Prostate gland (tissue), 2 donors: ENCODE measurements at regions of chr7 and their contacts with region 1.

Region 1: GRCh38 chr7:134778941-134779740 is at the start of gene CALD1:
- DNase-seq: peak; percentile 91
- H3K4me3 ChIP-seq: peak within 1 kb of the TSS; percentile 40 to 57
- H3K27ac ChIP-seq: peak within 1 kb of the TSS; percentile 85 to 88
- H3K4me1 ChIP-seq: peaks cover 7% of the 10 kb centered on the region
- H3K27me3 ChIP-seq: no peaks in the 10 kb centered on the region
- CTCF ChIP-seq: no peak
- POLR2A ChIP-seq: peak; percentile 47
- total RNA-seq, gene CALD1: 307 to 314 TPM

Region 2: DNA sequence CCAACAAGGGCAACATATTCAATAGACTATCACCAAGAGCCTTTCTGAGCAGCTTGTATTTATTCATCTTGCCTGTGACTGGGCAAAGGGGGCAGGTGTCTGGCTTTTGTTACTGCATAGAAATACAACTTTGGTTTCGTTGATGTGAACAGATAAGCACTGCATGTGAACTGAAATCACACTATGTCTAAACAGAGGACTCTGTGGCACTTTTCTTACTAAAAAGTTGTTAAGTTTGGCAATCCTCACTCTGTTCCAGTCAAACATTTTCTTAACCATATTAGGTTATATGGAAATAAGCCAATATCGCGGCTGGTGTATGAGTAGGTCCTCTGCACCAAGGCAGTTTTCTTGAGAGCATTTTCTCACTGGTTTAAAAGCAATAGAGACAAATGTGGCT is 48.7 kb after region 1 on chr7:
- intact Hi-C with region 1: loop called (anchors 5 kb)
- DNase-seq: no peak
- H3K4me3 ChIP-seq: no peak overlapping the region
- H3K27ac ChIP-seq: peak overlapping the region; percentile 31 to 50
- H3K4me1 ChIP-seq: no peaks in the 10 kb centered on the region
- H3K27me3 ChIP-seq: no peaks in the 10 kb centered on the region
- CTCF ChIP-seq: no peak
- POLR2A ChIP-seq: no peak

Region 3: GRCh38 chr7:134891262-134891695 is 112.1 kb after region 1 on chr7:
- intact Hi-C with region 1: loop called (anchors 10 kb)
- DNase-seq: peak; percentile 78
- H3K4me3 ChIP-seq: peak overlapping the region; percentile 32 to 36
- H3K27ac ChIP-seq: peak overlapping the region; percentile 71 to 72
- H3K4me1 ChIP-seq: no peaks in the 10 kb centered on the region
- H3K27me3 ChIP-seq: no peaks in the 10 kb centered on the region
- CTCF ChIP-seq: no peak
- POLR2A ChIP-seq: no peak

Region 4: GRCh38 chr7:134932707-134933370 is 153.7 kb after region 1 on chr7:
- intact Hi-C with region 1: loop called (anchors 5 kb)
- DNase-seq: no peak
- H3K4me3 ChIP-seq: no peak overlapping the region
- H3K27ac ChIP-seq: peak overlapping the region in 1 of 2 donors; percentile 29
- H3K4me1 ChIP-seq: no peaks in the 10 kb centered on the region
- H3K27me3 ChIP-seq: no peaks in the 10 kb centered on the region
- CTCF ChIP-seq: no peak
- POLR2A ChIP-seq: no peak

Region 5: GRCh38 chr7:134946260-134946659 is 167.1 kb after region 1 on chr7:
- intact Hi-C with region 1: loop called (anchors 5 kb)
- DNase-seq: no peak
- H3K4me3 ChIP-seq: no peak overlapping the region
- H3K27ac ChIP-seq: no peak overlapping the region
- H3K4me1 ChIP-seq: no peaks in the 10 kb centered on the region
- H3K27me3 ChIP-seq: no peaks in the 10 kb centered on the region
- CTCF ChIP-seq: no peak
- POLR2A ChIP-seq: no peak